Activated CD8-positive, alpha-beta T cell treated with anti-CD3 and anti-CD28 coated beads, Interleukin-2, amount 10 ng/mL, durations not matched to agents 7 days and 5 days (primary cell): ENCODE measurements at regions of chr1 and their contacts with region 1.

Region 1: DNA sequence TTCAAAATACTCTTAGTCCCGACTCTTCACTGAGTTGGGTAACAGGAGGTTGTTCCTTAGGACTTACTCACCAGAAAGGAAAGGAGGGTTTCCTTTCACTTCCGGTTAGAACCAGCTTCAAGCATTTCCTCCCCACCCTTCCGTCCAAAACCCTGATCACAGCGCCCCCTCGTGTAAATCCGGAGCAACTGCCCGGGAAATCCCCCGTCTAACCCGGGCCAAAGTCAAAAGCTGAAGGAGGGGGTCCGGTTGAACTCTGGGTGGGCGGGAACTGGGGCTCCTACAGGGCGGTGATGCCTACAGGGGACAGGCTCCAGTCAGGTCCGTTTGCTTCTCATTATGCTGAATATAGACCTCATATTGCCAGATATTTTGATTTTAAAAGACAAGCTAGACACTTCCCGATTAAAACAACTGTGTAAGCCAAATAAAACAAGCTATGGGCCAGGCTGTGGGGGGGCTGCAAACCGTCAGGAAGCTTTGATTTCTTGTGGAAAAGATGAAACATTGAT is 15.0 kb upstream of the MTARC2 start:
- DNase-seq: peak; percentile 84
- ATAC-seq: peak; percentile 96
- H3K4me3 Mint-ChIP-seq: no peak overlapping the region
- H3K27ac Mint-ChIP-seq: no peak overlapping the region
- H3K4me1 Mint-ChIP-seq: peaks cover 10% of the 10 kb centered on the region
- H3K27me3 Mint-ChIP-seq: peaks cover 6% of the 10 kb centered on the region

Region 2: GRCh38 chr1:220189750-220190347 is 543.3 kb before region 1 on chr1:
- CTCF ChIA-PET with region 1: interaction called, 14 read pairs
- POLR2A ChIA-PET with region 1: no interaction called
- DNase-seq: no peak
- ATAC-seq: no peak
- H3K4me3 Mint-ChIP-seq: no peak overlapping the region
- H3K27ac Mint-ChIP-seq: no peak overlapping the region
- H3K4me1 Mint-ChIP-seq: no peaks in the 10 kb centered on the region
- H3K27me3 Mint-ChIP-seq: no peaks in the 10 kb centered on the region

Region 3: GRCh38 chr1:220298470-220298869 is 434.7 kb before region 1 on chr1:
- CTCF ChIA-PET with region 1: interaction called, 21 read pairs
- POLR2A ChIA-PET with region 1: no interaction called
- DNase-seq: no peak
- ATAC-seq: no peak
- H3K4me3 Mint-ChIP-seq: no peak overlapping the region
- H3K27ac Mint-ChIP-seq: no peak overlapping the region
- H3K4me1 Mint-ChIP-seq: no peaks in the 10 kb centered on the region
- H3K27me3 Mint-ChIP-seq: peaks cover 9% of the 10 kb centered on the region

Region 4: GRCh38 chr1:220680085-220680687 is 53.0 kb before region 1 on chr1:
- CTCF ChIA-PET with region 1: interaction called, 16 read pairs
- POLR2A ChIA-PET with region 1: no interaction called
- DNase-seq: no peak
- ATAC-seq: peak; percentile 67
- H3K4me3 Mint-ChIP-seq: no peak overlapping the region
- H3K27ac Mint-ChIP-seq: no peak overlapping the region
- H3K4me1 Mint-ChIP-seq: no peaks in the 10 kb centered on the region
- H3K27me3 Mint-ChIP-seq: no peaks in the 10 kb centered on the region

Region 5: GRCh38 chr1:220690140-220691025 is 42.8 kb before region 1 on chr1 and contains the start of gene C1orf115:
- CTCF ChIA-PET with region 1: interaction called, 15 read pairs
- POLR2A ChIA-PET with region 1: no interaction called
- DNase-seq: peak; percentile 73
- ATAC-seq: peak; percentile 98
- H3K4me3 Mint-ChIP-seq: peak within 1 kb of the TSS; percentile 72
- H3K27ac Mint-ChIP-seq: no peak within 1 kb of the TSS
- H3K4me1 Mint-ChIP-seq: peaks cover 6% of the 10 kb centered on the region
- H3K27me3 Mint-ChIP-seq: peaks cover 20% of the 10 kb centered on the region
- total RNA-seq, gene C1orf115: 0.08 to 0.10 TPM

Region 6: GRCh38 chr1:220748089-220748934 is 15.2 kb after region 1 on chr1 and contains the start of gene MTARC2:
- CTCF ChIA-PET with region 1: interaction called, 15 read pairs
- POLR2A ChIA-PET with region 1: no interaction called
- DNase-seq: no peak
- ATAC-seq: peak; percentile 71
- H3K4me3 Mint-ChIP-seq: peak within 1 kb of the TSS; percentile 4
- H3K27ac Mint-ChIP-seq: no peak within 1 kb of the TSS
- H3K4me1 Mint-ChIP-seq: peaks cover 8% of the 10 kb centered on the region
- H3K27me3 Mint-ChIP-seq: peaks cover 55% of the 10 kb centered on the region
- total RNA-seq, gene MTARC2: not detected

Region 7: DNA sequence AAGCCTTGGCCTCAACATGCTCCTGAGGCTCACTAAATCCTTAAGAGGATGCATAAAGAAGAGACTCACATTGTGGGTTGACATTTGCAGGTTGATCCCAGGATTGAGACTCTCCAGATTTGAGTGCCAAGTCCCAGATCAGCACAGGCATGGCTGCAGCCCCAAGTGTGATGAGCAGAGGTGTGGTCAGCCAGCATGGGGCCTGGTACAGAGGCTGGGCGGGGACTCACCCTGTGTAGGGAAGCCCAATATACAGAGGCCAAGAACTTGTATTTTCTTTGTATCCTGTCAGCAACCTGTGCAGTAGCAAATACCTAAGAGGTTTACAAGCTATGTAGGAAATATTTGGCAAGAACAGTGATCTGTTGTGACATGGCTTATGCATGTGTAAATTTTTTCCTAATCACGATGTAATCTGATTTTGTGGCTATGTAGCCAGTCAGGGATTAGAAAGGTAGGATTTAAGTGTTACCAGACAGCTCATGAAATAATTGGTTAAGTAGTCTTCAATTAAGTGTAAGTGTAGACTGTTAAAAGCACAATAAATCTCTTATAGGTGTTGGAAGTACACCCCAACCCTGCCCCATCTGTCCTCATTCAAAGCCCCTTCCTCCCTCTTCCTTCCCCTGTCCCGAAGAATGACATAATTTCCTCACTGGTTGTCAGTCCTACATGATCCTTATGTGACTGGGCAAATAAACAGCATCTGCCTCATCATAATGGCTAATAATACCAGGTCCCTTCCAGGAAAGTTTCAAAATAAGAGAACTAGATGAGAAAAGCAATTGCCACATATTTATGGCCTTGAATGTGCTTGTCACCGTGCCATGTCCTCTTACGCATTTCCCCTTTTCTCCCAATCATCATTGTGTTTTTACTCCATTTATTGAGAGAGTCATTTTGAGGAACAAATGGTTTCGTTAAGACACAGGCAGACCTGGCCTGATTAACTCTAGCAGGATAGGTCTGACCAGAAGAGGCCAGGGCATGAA is 267.0 kb after region 1 on chr1:
- CTCF ChIA-PET with region 1: no interaction called
- POLR2A ChIA-PET with region 1: no interaction called
- DNase-seq: no peak
- ATAC-seq: no peak
- H3K4me3 Mint-ChIP-seq: no peak overlapping the region
- H3K27ac Mint-ChIP-seq: no peak overlapping the region
- H3K4me1 Mint-ChIP-seq: no peaks in the 10 kb centered on the region
- H3K27me3 Mint-ChIP-seq: no peaks in the 10 kb centered on the region